ENCODE measurements at regions of chr10 and their contacts with region 1.

Region 1: DNA sequence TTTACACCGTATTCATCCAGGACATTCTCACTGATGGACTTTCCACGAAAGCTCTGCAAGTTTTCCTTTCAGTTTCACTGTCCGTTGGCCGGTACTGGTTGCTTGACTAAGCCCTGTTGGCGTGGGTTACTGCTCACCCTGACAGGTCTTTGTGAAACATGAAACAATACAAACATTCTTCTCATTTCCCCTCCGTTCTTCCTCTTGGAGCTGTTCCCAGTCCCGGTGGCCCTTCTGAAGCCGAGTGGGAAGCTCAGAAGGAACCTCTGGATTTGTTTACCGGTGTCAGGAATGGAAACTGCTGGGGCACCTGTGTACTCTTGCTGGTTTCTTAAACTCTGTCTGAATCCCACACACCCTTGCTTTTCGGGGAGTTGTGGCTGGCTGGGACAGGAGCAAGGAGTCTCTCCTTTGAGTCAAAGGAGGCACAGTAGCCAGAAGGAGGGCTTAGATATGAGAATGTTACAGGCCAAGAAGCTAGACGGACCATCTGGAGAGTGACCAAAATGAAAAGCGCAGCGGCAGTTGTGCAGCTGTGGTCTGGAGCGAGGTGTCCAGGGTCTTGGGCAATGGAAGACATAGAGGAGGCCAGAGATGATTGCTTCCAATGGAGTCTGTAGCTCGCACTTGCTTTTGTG is 45.7 kb downstream of the LYZL2 start:
- DNase-seq: peak; percentile 53
- CTCF ChIP-seq: no peak

Region 2: GRCh38 chr10:30359373-30360206 is 224.3 kb before region 1 on chr10:
- CTCF ChIA-PET with region 1: interaction called, 74 read pairs
- POLR2A ChIA-PET with region 1: no interaction called
- DNase-seq: peak; percentile 71
- CTCF ChIP-seq: peak; percentile 90

Region 3: DNA sequence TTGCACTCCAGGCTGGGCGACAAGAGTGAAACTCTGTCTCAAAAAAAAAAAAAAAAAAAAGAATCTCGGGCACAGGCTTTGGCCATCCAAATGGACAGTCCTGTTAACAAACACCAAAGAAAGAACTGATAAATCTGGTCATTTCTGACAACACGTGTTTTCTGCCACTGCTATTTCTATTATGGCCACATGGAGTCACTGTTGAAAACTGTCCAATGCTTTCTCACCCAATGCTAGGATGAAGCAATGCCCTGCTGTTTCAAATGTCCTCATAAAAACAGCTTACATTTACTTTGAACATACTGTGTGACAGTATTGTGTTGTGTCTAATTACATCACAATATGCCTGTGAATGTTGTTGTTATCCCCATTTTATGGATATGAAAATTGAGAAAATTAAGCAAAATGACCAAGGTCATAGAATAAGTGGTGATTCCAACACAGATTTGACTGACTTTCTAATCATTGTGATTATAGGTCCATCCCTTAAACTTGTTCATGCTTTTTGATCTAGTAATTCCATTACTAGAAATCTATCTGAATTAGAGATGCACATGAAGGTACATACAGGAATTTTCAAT is 169.8 kb before region 1 on chr10:
- CTCF ChIA-PET with region 1: interaction called, 10 read pairs
- POLR2A ChIA-PET with region 1: no interaction called
- DNase-seq: peak; percentile 70
- CTCF ChIP-seq: peak; percentile 85

Region 4: GRCh38 chr10:30553625-30554439 is 30.1 kb before region 1 on chr10:
- CTCF ChIA-PET with region 1: interaction called, 38 read pairs
- POLR2A ChIA-PET with region 1: no interaction called
- DNase-seq: no peak
- CTCF ChIP-seq: no peak

Region 5: GRCh38 chr10:30600005-30600404 is 16.1 kb after region 1 on chr10:
- CTCF ChIA-PET with region 1: interaction called, 10 read pairs
- POLR2A ChIA-PET with region 1: no interaction called
- DNase-seq: no peak
- CTCF ChIP-seq: no peak

Region 6: GRCh38 chr10:30625080-30625479 is 41.2 kb after region 1 on chr10:
- CTCF ChIA-PET with region 1: no interaction called
- POLR2A ChIA-PET with region 1: no interaction called
- DNase-seq: no peak
- CTCF ChIP-seq: no peak

Region 7: DNA sequence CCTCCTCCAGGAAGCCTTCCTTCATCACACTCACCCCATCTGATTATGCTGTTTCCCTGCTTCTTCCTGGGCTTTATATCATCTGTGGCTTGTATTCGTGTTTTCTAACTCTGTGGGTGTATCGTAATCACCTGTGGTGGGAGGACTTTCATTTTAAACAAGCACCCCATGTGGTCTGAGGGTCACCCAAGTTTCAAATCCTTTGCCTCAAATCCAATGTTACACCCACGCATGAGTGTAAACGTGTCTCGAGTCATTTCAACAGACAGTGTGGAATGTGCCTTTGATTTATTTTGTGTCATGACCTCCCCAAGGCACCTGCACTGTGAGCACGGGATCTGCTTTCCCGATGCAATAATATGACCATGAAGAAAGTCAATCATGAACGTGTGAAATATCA is 63.2 kb after region 1 on chr10:
- CTCF ChIA-PET with region 1: no interaction called
- POLR2A ChIA-PET with region 1: no interaction called
- DNase-seq: no peak
- CTCF ChIP-seq: no peak

Region 8: GRCh38 chr10:30840406-30841050 is 256.6 kb after region 1 on chr10:
- CTCF ChIA-PET with region 1: no interaction called
- POLR2A ChIA-PET with region 1: no interaction called
- DNase-seq: no peak
- CTCF ChIP-seq: no peak

Measured in GM10248 (cell line).